ENCODE measurements at regions of chr5 and their contacts with region 1.

Region 1: DNA sequence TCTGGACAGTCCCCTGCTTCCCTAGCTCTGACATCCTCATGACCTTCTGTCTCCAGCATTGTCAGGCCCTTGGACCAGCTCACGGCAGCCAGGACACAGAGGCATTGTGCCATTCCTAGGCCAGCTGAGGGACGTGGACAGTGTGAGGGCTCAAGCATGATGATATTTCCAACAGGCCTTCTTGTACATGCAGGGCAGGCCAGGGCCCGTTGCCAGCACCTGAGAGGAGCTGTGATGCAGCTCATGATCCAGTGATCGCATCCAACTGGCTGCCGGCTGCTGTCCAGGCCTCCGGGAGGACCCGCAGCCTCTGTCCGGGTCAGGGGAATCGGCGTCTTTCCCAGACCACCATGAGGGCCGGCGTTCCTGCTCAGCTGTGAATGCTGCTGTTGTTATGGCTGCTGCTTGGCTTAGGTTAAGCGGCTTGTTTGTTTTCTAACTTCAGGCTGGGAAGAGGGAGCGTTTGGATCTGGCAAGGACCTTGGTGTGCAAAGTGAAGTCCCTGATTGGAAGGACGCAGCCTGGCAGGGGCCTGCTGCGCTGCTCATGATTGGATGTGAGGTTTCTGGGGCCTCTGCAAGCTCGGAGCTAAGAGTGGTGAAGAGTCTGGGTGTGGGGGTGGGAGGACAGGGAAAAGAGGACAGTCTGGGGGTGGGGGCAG is 53.8 kb downstream of the PDZD2 start:
- DNase-seq: peak; percentile 78

Region 2: DNA sequence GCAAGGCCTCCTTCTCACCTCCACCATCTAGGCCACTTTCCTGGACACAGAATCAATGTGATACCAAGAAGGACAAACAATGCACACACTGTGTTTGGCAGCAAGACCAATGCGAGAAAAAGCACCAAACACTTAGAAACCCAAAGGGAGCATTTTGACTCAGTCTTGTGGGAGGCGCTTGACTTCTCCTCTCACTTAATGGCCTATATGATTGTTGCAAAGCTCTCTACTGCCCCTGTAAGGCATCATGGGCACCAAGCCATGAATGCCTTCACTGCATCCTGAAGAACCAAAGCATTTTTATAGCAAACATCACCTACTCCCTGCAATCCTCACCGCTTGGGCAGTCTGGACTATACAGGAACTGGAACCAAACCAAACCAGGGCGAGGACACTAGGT is 441.7 kb before region 1 on chr5:
- intact Hi-C with region 1: no loop called
- DNase-seq: no peak

Region 3: DNA sequence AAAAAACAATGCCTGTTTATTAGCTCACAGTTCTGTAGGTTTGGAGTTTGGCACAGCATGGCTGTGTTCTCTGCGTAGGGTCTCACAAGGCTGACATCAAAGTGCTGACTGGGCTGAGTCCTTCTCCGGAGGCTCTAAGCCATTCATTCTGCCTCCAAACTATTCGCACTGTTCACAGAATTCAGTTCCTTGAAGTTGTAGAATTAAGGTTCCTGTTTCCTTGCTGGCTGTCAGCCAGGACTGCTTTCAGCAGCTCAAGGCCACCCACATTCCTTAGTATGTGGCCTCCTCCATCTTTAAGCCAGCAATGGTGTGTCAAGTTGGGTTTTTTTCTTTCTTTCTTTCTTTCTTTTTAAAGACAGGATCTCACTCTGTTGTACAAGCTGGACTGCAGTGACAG is 337.4 kb before region 1 on chr5:
- intact Hi-C with region 1: no loop called
- DNase-seq: no peak

Region 4: GRCh38 chr5:31770998-31771397 is 78.3 kb after region 1 on chr5:
- intact Hi-C with region 1: loop called (anchors 5 kb)
- DNase-seq: no peak

Measured in cardiac septum (tissue), 1 donor.